IMR-90 (cell line): ENCODE measurements at regions of chr5 and their contacts with region 1.

Region 1: GRCh38 chr5:113050721-113051382 is 74.3 kb downstream of the DCP2 start:
- DNase-seq: peak; percentile 84
- ATAC-seq: peak; percentile 91
- H3K4me3 ChIP-seq: no peak overlapping the region
- H3K27ac ChIP-seq: 0 out of 2 replicates have a peak overlapping the region, but pooled peaks have one; percentile 3
- H3K4me1 ChIP-seq: peaks cover 18% of the 10 kb centered on the region
- H3K27me3 ChIP-seq: no peaks in the 10 kb centered on the region
- CTCF ChIP-seq: no peak
- POLR2A ChIP-seq: no peak
- RAD21 ChIP-seq: no peak

Region 2: GRCh38 chr5:112174959-112175594 is 875.8 kb before region 1 on chr5:
- CTCF ChIA-PET with region 1: no interaction called
- POLR2A ChIA-PET with region 1: no interaction called
- dilution Hi-C with region 1: no loop called
- in situ Hi-C with region 1: no loop called
- intact Hi-C with region 1: no loop called
- DNase-seq: peak; percentile 26
- ATAC-seq: peak; percentile 80
- H3K4me3 ChIP-seq: 0 out of 2 replicates have a peak overlapping the region, but pooled peaks have one; percentile 27
- H3K27ac ChIP-seq: no peak overlapping the region
- H3K4me1 ChIP-seq: no peaks in the 10 kb centered on the region
- H3K27me3 ChIP-seq: no peaks in the 10 kb centered on the region
- CTCF ChIP-seq: peak; percentile 56
- POLR2A ChIP-seq: no peak
- RAD21 ChIP-seq: peak; percentile 48

Region 3: GRCh38 chr5:112968411-112969106 is 82.3 kb before region 1 on chr5:
- CTCF ChIA-PET with region 1: no interaction called
- POLR2A ChIA-PET with region 1: no interaction called
- dilution Hi-C with region 1: no loop called
- in situ Hi-C with region 1: no loop called
- intact Hi-C with region 1: no loop called
- DNase-seq: peak; percentile 68
- ATAC-seq: peak; percentile 71
- H3K4me3 ChIP-seq: no peak overlapping the region
- H3K27ac ChIP-seq: peak overlapping the region; percentile 80
- H3K4me1 ChIP-seq: peaks cover 14% of the 10 kb centered on the region
- H3K27me3 ChIP-seq: no peaks in the 10 kb centered on the region
- CTCF ChIP-seq: no peak
- POLR2A ChIP-seq: no peak
- RAD21 ChIP-seq: no peak

Region 4: GRCh38 chr5:113204525-113205161 is 153.8 kb after region 1 on chr5:
- CTCF ChIA-PET with region 1: no interaction called
- POLR2A ChIA-PET with region 1: no interaction called
- dilution Hi-C with region 1: no loop called
- in situ Hi-C with region 1: no loop called
- intact Hi-C with region 1: loop called (anchors 5 kb)
- DNase-seq: peak; percentile 64
- ATAC-seq: peak; percentile 30; the same call in 1 of the 2 replicates
- H3K4me3 ChIP-seq: no peak overlapping the region
- H3K27ac ChIP-seq: no peak overlapping the region
- H3K4me1 ChIP-seq: peaks cover 18% of the 10 kb centered on the region
- H3K27me3 ChIP-seq: no peaks in the 10 kb centered on the region
- CTCF ChIP-seq: no peak
- POLR2A ChIP-seq: no peak
- RAD21 ChIP-seq: no peak